Activated naive CD4-positive, alpha-beta T cell treated with anti-CD3 and anti-CD28 coated beads, Interleukin-2, amount 10 ng/mL, durations not matched to agents 7 days and 5 days (primary cell): ENCODE measurements at regions of chr3 and their contacts with region 1.

Region 1: DNA sequence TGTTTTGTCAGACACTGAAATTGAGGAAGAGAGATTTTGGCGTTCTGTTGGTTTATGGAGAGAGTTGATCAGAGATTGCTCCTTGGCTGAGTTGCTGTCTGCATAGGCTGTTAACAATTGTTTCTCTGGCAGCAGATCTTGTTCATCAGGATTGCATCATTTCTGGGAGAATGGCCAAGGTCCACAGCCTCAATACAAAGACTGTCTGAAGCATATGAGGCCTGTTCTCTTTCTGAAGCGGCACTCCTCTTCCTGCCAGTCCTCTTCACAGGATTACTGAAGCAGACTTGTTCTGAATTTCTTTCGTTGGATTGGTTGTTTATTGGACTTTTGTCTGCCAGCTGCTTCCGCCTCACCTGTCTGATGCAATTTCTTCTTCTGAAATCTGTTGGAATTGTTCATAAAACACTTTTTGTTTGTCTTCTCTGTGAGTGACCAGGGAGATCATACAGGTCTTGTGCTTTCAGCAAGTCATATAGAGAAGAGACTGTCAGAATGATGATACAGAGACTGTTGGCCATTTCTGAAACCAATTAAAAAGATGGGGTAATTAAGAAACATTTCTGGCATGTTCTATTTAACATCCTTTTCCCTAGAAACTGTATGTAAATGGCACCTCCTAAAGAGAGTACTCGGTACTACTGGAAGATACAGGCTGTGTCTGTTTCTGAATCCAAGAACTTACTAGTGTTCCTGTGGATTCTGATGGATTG is 25.5 kb downstream of the SETD5 start:
- DNase-seq: no peak
- H3K4me3 Mint-ChIP-seq: no peak overlapping the region
- H3K27ac Mint-ChIP-seq: peak overlapping the region; percentile 35
- H3K4me1 Mint-ChIP-seq: peaks cover 20% of the 10 kb centered on the region
- H3K27me3 Mint-ChIP-seq: no peaks in the 10 kb centered on the region

Region 2: DNA sequence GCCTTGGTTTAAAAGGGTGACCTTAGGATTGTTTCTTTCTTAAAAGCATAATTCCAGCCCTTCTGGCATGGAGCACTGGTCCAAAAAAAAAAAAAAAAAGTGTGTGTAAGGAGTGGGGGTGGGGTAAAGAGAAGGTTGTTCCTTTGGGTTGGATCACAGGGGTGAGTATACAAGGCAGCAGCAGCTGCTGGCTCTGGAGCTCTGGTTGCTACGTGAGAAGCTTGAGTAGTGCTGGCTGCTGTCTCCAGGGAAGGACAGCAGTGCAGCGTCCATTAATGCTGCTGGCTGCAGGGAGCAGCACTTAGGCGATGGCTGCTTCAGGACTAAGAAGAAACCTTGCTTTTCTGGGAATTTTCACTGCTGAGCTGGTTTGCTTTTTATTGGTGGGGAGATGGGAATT is 23.1 kb before region 1 on chr3:
- CTCF ChIA-PET with region 1: interaction called, 10 read pairs
- DNase-seq: peak; percentile 28
- H3K4me3 Mint-ChIP-seq: peak overlapping the region; percentile 98
- H3K27ac Mint-ChIP-seq: peak overlapping the region; percentile 65
- H3K4me1 Mint-ChIP-seq: peaks cover 64% of the 10 kb centered on the region
- H3K27me3 Mint-ChIP-seq: peaks cover 3% of the 10 kb centered on the region